ENCODE measurements at regions of chr16 and their contacts with region 1.

Region 1: DNA sequence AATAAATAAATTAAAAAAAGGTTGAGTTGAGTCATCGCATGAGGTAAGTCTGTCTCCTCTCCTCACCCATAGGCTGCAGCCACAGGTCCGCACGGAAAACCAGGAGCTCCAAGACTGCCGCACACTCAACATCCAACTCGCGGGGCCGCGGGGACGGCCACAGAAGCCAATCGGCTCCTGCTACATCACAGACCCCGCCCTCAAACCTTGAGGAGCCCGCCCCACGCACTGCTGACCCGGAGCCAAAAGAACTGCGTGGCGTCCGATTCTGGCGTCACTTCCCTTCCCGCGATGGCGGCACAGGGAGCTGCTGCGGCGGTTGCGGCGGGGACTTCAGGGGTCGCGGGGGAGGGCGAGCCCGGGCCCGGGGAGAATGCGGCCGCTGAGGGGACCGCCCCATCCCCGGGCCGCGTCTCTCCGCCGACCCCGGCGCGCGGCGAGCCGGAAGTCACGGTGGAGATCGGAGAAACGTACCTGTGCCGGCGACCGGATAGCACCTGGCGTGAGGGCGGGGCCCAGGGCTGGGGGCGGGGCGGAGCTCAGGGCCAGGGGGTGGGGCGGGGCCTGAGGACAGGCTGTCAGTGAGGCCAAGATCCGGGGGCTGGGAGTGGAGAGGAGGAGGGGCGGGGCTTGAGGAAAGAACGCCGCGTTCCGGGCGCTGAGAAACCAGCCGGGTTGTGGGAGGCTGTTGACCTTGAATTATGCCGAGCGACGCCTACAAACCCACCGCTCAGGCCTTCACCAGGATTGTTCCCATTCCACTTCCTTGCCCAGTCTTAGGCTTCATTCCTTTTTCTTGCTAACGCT is at the start of gene KAT8:
- DNase-seq: peak; percentile 96
- ATAC-seq: peak; percentile 93
- H3K4me3 Mint-ChIP-seq: peak within 1 kb of the TSS; percentile 83
- H3K27ac Mint-ChIP-seq: peak within 1 kb of the TSS; percentile 80
- H3K4me1 Mint-ChIP-seq: peaks cover 16% of the 10 kb centered on the region
- H3K27me3 Mint-ChIP-seq: no peaks in the 10 kb centered on the region
- CTCF ChIP-seq: no peak
- total RNA-seq, gene KAT8: 65.7 to 70.8 TPM (median 69.8 TPM) in 3 replicates

Region 2: GRCh38 chr16:31073968-31074813 is 43.4 kb before region 1 on chr16 and contains the starts of genes ZNF646 and ZNF668:
- CTCF ChIA-PET with region 1: interaction called, 3 read pairs
- POLR2A ChIA-PET with region 1: interaction called, 13 read pairs
- DNase-seq: peak; percentile 97
- ATAC-seq: peak; percentile 86
- H3K4me3 Mint-ChIP-seq: peak within 1 kb of the TSS; percentile 99
- H3K27ac Mint-ChIP-seq: peak within 1 kb of the TSS; percentile 95
- H3K4me1 Mint-ChIP-seq: peaks cover 19% of the 10 kb centered on the region
- H3K27me3 Mint-ChIP-seq: no peaks in the 10 kb centered on the region
- CTCF ChIP-seq: no peak
- total RNA-seq, gene ZNF646: 26.7 to 29.3 TPM (median 29.1 TPM) in 3 replicates
- total RNA-seq, gene ZNF668: 13.5 to 17.3 TPM (median 16.6 TPM) in 3 replicates

Region 3: GRCh38 chr16:31128711-31129567 is 11.3 kb after region 1 on chr16:
- CTCF ChIA-PET with region 1: interaction called, 12 read pairs
- POLR2A ChIA-PET with region 1: interaction called, 26 read pairs
- DNase-seq: no peak
- ATAC-seq: no peak
- H3K4me3 Mint-ChIP-seq: no peak overlapping the region
- H3K27ac Mint-ChIP-seq: 0 out of 2 replicates have a peak overlapping the region, but pooled peaks have one; percentile 66
- H3K4me1 Mint-ChIP-seq: peaks cover 36% of the 10 kb centered on the region
- H3K27me3 Mint-ChIP-seq: no peaks in the 10 kb centered on the region
- CTCF ChIP-seq: no peak

Region 4: GRCh38 chr16:31134625-31135547 is 17.3 kb after region 1 on chr16:
- CTCF ChIA-PET with region 1: interaction called, 12 read pairs
- POLR2A ChIA-PET with region 1: interaction called, 26 read pairs
- DNase-seq: peak; percentile 63
- ATAC-seq: peak; percentile 56
- H3K4me3 Mint-ChIP-seq: peak overlapping the region; percentile 87
- H3K27ac Mint-ChIP-seq: peak overlapping the region; percentile 98
- H3K4me1 Mint-ChIP-seq: peaks cover 67% of the 10 kb centered on the region
- H3K27me3 Mint-ChIP-seq: no peaks in the 10 kb centered on the region
- CTCF ChIP-seq: no peak